ENCODE measurements at regions of chr1 and their contacts with region 1.

Region 1: DNA sequence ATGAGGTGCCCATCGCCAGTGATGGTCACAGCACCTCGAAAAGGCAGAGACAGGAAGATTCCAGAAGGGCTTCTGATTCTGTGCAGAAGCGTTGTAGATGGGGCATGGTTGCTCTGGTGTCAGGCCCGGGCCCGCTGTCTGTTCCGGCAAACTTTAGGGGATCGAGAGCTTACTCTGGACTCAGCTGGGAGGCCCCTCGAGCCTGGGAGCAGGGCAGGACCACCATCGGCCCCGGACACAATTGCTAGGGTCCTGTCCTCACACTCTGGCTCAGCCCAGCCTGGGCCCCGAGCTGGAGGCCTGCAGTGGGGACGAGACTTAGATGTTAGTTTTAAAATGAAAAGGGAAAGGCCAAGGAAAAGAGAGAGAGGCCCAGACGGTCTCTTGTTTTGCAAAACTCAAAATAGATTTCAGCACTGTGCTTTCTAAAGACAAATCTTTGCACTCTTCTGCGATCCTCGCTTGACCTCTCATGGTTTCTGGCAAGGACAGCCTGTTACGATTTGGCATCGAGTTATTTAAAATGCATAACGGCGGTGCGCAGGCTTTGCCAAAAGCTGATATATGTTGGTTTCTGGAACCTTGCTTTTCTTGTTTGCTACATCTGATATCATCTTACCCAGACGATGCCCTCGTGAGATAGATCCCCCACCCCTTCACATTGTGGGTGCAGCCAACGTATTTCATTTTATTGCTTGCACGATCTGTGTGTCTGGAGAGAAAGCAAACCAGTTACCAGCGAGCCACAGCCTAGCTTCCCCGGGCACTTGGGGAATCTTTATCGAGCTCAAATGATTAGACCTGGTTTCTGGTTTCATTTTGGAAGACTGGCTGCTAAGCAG is 58.0 kb downstream of the PRDM16 start:
- DNase-seq: no peak
- ATAC-seq: peak; percentile 46
- H3K4me3 ChIP-seq: no peak overlapping the region
- H3K27ac ChIP-seq: peak overlapping the region; percentile 91 to 98
- H3K4me1 ChIP-seq: no peaks in the 10 kb centered on the region
- H3K27me3 ChIP-seq: no peaks in the 10 kb centered on the region

Region 2: DNA sequence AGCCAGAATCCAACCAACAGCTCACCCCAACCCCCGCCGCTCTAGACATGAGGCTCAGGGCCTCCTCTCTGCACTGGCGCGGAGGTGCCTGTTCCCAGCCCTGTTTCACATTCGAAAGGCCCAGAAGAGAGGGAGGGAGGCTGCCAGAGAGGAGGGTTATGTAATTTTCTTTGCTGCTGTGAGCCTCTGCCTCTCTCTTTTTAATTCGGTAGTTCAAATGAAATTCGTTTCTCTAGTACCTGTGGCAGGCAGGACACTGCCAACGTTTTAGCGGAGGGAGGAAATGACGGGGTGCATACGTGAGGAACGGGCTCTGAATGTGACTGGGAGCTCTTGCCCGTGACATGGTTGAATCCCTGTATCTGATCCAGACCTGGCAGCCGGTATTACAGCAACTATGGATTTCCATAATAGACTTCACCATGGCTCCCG is 48.5 kb before region 1 on chr1:
- intact Hi-C with region 1: loop called (anchors 2 to 5 kb)
- DNase-seq: no peak
- ATAC-seq: peak; percentile 33
- H3K4me3 ChIP-seq: no peak overlapping the region
- H3K27ac ChIP-seq: peak overlapping the region; percentile 6 to 86
- H3K4me1 ChIP-seq: no peaks in the 10 kb centered on the region
- H3K27me3 ChIP-seq: no peaks in the 10 kb centered on the region

Region 3: DNA sequence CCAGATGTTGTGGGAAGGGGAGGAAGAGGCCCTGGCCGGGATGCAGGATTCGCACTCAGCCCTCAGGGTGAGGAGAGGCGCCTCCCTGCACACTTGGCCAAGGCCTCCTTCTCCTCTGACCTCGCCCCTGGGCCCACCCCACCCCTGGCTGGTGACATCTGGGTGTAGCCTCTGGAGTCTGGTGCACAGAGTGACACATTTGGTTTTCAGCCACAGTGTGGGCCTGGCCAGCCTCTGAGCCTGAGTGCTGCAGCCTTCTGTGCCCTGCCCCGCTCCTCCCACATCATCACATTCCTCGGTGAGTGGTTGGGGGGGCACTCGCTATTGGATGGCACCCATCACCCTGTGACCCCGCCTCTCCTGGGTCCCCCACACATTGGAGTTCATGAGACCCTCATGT is 12.1 kb before region 1 on chr1:
- intact Hi-C with region 1: loop called in 1 of 2 experiments (anchors 2 kb)
- DNase-seq: peak in 1 of 2 donors; percentile 68
- ATAC-seq: no peak
- H3K4me3 ChIP-seq: no peak overlapping the region
- H3K27ac ChIP-seq: no peak overlapping the region
- H3K4me1 ChIP-seq: peaks cover 3 to 5% of the 10 kb centered on the region in 2 donors
- H3K27me3 ChIP-seq: no peaks in the 10 kb centered on the region

Region 4: GRCh38 chr1:3170561-3171453 is 43.8 kb after region 1 on chr1:
- intact Hi-C with region 1: loop called (anchors 5 kb)
- DNase-seq: peak; percentile 89 to 95
- ATAC-seq: peak; percentile 88
- H3K4me3 ChIP-seq: peak overlapping the region in 1 of 2 donors; percentile 8
- H3K27ac ChIP-seq: peak overlapping the region; percentile 78 to 93
- H3K4me1 ChIP-seq: peaks cover 5 to 6% of the 10 kb centered on the region in 2 donors
- H3K27me3 ChIP-seq: no peaks in the 10 kb centered on the region

Region 5: GRCh38 chr1:3186513-3186921 is 59.5 kb after region 1 on chr1:
- intact Hi-C with region 1: loop called (anchors 5 kb)
- DNase-seq: peak; percentile 95
- ATAC-seq: peak; percentile 83
- H3K4me3 ChIP-seq: no peak overlapping the region
- H3K27ac ChIP-seq: peak overlapping the region; percentile 85 to 89
- H3K4me1 ChIP-seq: no peaks in the 10 kb centered on the region
- H3K27me3 ChIP-seq: no peaks in the 10 kb centered on the region

Region 6: DNA sequence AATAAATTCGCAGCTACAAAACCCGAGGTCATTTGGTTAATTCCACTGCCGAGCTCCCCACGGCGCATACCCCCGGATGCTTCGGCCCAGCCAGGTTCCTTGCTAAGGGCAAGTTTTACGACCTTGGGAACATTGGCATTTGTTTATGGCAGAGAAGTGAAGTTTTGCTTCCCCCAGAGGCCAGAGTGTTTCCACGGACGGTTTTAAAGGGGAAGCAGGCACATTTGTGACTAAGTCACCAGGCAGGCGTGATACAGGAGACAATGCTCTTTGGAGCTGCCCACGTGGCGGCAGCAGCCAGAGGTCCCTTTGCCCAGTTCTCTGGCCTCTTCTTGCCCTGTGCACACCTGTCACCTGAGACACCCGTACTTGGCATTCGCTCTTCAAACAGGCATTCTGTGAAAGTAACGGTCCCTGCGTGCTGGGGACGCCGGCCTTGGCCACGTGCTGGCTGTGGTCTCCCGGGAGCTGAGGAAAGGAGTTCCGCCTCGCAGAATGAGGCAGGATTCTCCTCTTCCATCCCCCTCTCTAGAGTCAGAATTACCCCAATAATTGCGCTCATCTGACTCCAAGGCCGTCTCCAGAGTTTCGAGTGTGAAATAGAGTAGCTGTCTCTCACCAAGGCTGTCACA is 80.4 kb after region 1 on chr1:
- intact Hi-C with region 1: no loop called
- DNase-seq: no peak
- ATAC-seq: peak; percentile 33
- H3K4me3 ChIP-seq: no peak overlapping the region
- H3K27ac ChIP-seq: peak overlapping the region in 1 of 2 donors; percentile 34
- H3K4me1 ChIP-seq: no peaks in the 10 kb centered on the region
- H3K27me3 ChIP-seq: no peaks in the 10 kb centered on the region